ENCODE measurements at regions of chr2 and their contacts with region 1.

Region 1: DNA sequence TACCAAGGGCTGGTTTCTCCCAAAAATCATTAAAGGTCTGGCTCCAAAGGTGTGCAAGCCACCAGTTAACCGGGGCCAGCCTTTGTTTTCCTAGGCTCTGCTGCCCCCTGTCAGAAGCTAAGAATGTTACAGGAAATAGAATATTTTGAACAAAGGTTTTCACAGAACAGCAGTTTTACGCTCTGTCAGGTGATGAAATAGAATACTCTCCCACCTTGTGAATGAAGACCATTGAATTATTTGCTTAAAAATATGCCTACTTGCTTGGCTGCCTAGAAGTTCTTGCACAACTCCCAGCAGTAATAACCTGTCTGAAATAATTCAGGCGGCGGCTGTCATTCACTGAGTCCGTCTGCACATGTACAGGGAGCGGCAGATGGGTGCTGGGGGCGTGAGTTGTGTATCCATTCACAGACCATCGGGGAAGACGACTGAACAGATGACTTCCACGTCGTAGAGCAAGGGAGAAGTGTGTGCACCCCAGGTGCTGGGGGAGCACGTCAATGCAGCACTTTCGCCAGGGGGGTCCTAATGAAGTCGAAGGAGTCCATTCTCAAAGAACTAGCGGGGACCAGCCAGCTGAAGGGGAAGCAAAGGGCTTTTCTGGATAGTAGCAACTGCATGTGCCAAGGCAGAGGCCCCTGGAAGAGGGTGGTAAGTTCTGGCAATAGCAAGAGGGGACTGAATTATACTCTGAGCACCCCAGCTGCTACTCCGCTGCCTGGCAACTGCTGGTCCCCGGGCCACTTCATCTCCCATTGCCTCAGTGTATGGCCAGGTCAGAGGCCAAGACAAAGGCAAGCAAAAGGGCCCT is 56.1 kb downstream of the SF3B1 start:
- DNase-seq: peak; percentile 74
- H3K4me3 ChIP-seq: no peak overlapping the region
- H3K27ac ChIP-seq: no peak overlapping the region
- H3K4me1 ChIP-seq: peaks cover 4% of the 10 kb centered on the region
- CTCF ChIP-seq: peak; percentile 96

Region 2: GRCh38 chr2:196750982-196751635 is 627.6 kb before region 1 on chr2:
- CTCF ChIA-PET with region 1: no interaction called
- POLR2A ChIA-PET with region 1: no interaction called
- intact Hi-C with region 1: loop called (anchors 5 kb)
- DNase-seq: peak; percentile 68
- H3K4me3 ChIP-seq: no peak overlapping the region
- H3K27ac ChIP-seq: no peak overlapping the region
- H3K4me1 ChIP-seq: peaks cover 8% of the 10 kb centered on the region
- CTCF ChIP-seq: peak; percentile 92

Region 3: DNA sequence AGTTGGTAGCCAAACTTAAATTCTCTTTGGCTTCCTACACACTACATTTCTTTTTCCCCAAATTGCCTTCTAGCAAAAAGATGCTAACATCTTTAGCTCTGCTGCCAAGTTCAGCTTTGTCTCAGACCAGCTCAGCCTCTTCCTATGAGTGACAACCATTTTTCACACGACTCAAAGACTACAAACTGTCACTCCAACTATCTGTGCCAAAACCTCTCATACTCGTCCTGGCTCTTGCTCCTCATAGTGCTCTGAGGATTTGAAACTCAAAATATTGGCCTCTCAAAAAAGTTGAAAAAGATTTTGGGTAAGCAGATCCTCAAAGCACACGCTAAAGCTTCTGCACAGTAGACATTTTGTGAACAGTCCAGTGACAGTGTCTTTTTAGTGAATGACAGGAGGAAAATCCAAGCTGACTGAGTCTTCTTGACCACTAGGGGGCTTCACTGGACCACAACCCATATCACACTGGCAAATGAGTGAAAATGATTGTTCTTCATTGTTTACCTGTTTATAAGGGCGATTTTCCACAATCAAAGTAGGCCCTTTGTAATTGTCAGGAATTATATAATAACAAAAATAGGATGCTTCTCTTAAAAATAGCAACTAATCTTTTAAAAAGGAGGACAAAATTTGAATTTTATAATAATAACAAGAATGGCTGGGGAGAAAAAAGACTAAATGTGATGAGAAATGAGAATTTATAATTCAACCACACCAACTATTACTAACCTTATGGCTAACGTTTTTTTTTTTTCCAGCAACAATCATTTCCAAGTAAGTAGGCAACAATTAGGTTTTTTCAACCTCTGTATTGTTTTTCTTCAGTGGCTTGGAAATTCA is 366.7 kb before region 1 on chr2:
- CTCF ChIA-PET with region 1: no interaction called
- POLR2A ChIA-PET with region 1: interaction called, 3 read pairs
- intact Hi-C with region 1: loop called (anchors 1 kb)
- DNase-seq: peak; percentile 71
- H3K4me3 ChIP-seq: no peak overlapping the region
- H3K27ac ChIP-seq: no peak overlapping the region
- H3K4me1 ChIP-seq: peaks cover 5% of the 10 kb centered on the region
- CTCF ChIP-seq: peak; percentile 98

Region 4: DNA sequence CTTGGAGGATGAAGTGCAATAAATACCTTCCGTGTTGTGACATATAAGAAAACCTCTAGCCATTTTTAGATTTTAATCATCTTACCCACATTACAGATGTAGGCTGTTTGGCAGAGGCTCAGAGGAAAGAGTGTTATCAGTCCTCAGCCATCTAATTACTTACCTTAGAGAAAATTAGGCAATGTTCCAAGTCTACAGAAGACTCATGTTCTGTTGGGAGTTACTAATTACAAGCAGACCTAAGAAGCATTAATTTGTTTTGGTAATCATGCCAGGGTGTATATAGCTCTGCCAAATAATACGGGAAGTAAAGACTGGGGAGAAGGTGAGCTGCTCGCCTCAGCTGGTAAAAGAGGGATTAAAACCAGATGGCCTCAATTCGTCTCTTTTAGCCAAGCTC is 326.3 kb before region 1 on chr2:
- CTCF ChIA-PET with region 1: no interaction called
- POLR2A ChIA-PET with region 1: no interaction called
- intact Hi-C with region 1: no loop called
- DNase-seq: no peak
- H3K4me3 ChIP-seq: no peak overlapping the region
- H3K27ac ChIP-seq: no peak overlapping the region
- H3K4me1 ChIP-seq: no peaks in the 10 kb centered on the region
- CTCF ChIP-seq: no peak

Region 5: DNA sequence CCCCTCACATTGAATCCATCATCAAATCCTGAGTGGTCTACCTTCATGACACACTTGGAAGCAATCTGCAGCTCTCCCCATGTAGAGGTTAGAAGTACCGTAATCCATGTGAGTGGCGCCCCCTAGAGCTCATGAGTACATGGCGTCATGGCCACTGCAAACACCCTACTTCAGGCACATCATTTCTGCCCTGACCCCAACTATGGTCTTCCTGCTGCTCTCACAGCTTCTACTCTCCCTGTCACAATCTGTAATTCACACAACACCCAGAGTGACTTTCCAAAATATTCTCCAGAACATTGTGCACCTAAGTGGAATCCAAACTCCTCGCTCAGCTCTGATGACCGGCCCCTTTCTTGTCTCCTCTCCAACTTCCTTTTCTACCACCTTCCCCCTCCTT is 210.0 kb before region 1 on chr2:
- CTCF ChIA-PET with region 1: no interaction called
- POLR2A ChIA-PET with region 1: no interaction called
- intact Hi-C with region 1: loop called (anchors 2 kb)
- DNase-seq: peak; percentile 87
- H3K4me3 ChIP-seq: no peak overlapping the region
- H3K27ac ChIP-seq: peak overlapping the region; percentile 6
- H3K4me1 ChIP-seq: peaks cover 50% of the 10 kb centered on the region
- CTCF ChIP-seq: peak; percentile 97

Region 6: DNA sequence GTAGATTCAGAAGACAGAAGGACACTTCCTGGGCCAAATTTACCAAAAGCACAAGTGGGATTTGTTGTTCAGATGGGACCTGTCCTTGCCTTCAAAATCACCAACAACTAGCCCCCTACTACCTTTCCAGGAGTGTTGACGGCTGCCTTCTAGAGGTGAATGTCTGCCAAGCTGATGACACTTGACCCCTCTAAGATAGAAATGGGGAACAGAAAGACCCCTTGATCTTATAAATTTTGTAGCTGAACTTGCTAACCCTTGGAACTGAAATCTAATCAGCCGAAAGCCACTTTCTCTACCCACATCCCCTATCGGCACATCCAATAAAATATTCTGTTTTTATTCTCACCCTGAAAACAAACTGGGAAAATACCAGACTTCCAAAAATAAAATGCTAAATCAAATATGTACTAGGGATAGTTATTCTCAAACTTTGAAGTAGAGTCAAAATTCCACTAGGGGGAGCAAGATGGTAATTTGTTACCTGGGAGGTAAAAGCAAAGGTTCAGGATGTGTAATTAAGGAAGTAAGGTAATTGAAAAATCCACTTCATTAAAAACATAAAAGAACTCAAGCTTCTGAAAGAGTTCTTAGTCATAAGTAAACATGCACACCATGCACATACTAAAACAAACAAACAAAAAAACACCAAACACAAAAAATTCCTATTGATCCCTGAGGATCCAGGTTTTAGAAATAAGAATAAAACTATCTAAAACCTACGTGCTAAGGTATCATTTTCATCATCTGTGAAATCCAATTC is 187.3 kb before region 1 on chr2:
- CTCF ChIA-PET with region 1: interaction called, 4 read pairs
- POLR2A ChIA-PET with region 1: no interaction called
- intact Hi-C with region 1: loop called (anchors 1 kb)
- DNase-seq: peak; percentile 83
- H3K4me3 ChIP-seq: no peak overlapping the region
- H3K27ac ChIP-seq: no peak overlapping the region
- H3K4me1 ChIP-seq: peaks cover 33% of the 10 kb centered on the region
- CTCF ChIP-seq: peak; percentile 99

Region 7: DNA sequence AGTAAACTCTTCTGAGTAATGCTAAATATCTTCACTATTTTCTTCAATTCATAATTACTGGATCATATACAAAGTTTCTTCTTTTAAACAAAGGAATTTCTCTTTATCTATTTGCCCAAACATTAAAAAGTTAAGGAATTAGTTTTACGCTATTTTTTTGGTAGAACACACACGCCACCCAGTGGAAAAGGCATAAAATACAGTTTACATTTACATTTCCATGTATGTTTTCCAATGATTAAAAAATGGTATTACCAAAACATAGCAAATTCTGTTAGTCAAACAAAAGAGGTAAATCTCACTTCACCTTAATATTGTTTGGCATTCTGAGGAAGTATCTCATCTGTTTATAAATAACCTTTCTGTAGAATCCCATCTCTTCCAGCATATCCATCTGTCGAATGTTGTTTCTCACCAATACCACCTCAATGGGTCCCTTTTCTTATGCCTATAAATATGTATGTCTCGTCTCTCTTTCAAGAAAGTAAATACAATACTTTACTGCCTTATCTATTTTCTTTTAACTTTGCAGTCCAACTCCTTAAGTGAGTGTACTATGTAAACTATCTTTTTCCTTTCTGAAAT is 399.2 kb after region 1 on chr2:
- CTCF ChIA-PET with region 1: no interaction called
- POLR2A ChIA-PET with region 1: no interaction called
- intact Hi-C with region 1: loop called (anchors 5 kb)
- DNase-seq: peak; percentile 47
- H3K4me3 ChIP-seq: no peak overlapping the region
- H3K27ac ChIP-seq: no peak overlapping the region
- H3K4me1 ChIP-seq: no peaks in the 10 kb centered on the region
- CTCF ChIP-seq: peak; percentile 98

Measured in OCI-LY7 (cell line).